Activated CD4-positive, alpha-beta T cell treated with anti-CD3 and anti-CD28 coated beads, Interleukin-2, amount 10 ng/mL, durations not matched to agents 24 days and 14 days (primary cell): ENCODE measurements at regions of chr11 and their contacts with region 1.

Region 1: DNA sequence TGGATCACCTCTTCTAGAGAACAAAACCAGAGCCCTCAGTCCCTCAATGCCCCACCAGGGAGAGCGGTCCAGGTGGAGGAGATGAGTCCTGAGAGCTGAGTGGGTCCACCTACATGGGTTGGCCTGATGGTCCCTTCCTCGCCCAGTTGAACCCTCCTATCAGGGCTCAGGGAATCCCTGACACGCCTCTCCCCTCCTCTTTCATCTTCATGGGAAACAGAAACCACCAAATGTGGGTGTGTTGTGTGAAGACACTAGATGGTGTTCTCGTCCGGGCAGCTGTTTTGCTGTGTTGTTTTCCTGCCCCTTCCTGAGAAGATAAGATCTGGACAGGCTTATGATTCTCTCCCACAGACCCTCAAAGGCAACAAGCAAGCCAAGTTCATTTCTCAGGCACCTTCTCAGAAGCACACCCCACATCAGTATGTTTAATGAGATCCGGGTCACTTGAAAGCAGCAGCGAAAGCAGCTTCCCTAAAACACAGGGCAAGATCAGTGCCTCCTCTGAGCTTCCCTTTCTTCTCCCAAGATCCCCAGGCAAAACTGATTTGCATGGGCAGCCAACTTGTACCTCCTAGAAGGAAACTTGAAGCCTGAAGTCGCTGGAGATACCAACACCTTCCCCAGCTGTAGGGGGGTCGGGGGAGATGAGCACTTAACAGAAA is 35.3 kb upstream of the POU2AF1 start:
- DNase-seq: peak; percentile 69
- H3K4me3 Mint-ChIP-seq: peak overlapping the region; percentile 80
- H3K27ac Mint-ChIP-seq: peak overlapping the region; percentile 90
- H3K4me1 Mint-ChIP-seq: peaks cover 72% of the 10 kb centered on the region
- H3K27me3 Mint-ChIP-seq: no peaks in the 10 kb centered on the region

Region 2: DNA sequence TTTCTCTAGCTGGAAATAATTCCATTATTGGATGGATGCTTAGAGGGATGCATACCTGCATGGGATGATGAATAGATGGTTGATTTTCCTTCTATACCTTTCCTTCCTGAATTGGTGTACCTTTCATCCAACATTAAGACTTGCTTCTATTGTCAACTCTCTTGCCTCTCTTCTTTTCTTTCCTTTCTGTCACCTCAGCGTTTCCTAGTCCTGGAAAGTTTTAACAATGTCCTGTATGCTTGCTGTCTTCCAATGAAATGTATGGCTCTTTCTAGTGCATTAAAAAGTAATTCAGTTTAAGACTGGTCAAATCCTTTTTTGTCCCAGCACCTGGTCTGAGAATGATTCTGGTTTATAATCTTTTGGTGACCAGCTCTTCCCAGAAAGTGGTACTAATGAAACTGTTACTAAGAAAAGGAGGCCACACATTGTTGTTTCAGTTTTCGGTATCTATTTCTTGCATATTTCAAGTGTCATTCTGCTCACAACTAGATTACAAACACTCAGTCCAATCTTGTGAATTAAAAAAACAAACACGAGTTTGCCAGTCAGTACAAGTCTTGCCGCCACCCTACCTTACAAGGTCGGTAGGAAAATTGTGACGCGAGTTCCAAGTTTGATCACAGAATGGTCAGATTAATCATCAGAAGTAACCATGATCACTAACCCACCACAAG is 43.4 kb before region 1 on chr11:
- intact Hi-C with region 1: loop called (anchors 1 kb)
- DNase-seq: no peak
- H3K4me3 Mint-ChIP-seq: peak overlapping the region; percentile 50
- H3K27ac Mint-ChIP-seq: peak overlapping the region; percentile 90
- H3K4me1 Mint-ChIP-seq: peaks cover 56% of the 10 kb centered on the region
- H3K27me3 Mint-ChIP-seq: no peaks in the 10 kb centered on the region

Region 3: DNA sequence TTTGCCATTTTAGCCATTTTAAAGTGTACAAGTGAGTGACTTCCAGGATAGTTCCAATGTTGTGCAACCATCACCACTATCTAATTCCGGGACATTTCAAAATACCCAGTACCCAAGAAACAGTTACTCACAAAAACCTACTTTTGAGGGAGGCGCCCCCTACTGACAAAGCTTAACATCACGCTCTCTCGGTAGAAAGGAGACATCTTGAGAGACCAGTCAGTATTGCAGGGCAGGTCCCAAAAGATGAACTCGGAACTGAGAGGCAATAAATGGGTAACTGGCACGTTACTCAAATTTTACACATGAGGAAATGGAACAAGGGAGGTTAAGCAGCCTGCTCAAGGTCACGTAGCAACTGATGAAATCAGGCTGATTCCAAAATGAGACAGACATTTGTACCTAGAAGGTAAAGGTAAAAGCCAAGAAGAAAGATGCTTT is 14.7 kb after region 1 on chr11:
- intact Hi-C with region 1: no loop called
- DNase-seq: peak; percentile 89
- H3K4me3 Mint-ChIP-seq: no peak overlapping the region
- H3K27ac Mint-ChIP-seq: no peak overlapping the region
- H3K4me1 Mint-ChIP-seq: peaks cover 4% of the 10 kb centered on the region
- H3K27me3 Mint-ChIP-seq: peaks cover 12% of the 10 kb centered on the region

Region 4: GRCh38 chr11:111446404-111447111 is 32.2 kb after region 1 on chr11:
- intact Hi-C with region 1: no loop called
- DNase-seq: peak; percentile 94
- H3K4me3 Mint-ChIP-seq: no peak overlapping the region
- H3K27ac Mint-ChIP-seq: peak overlapping the region; percentile 4
- H3K4me1 Mint-ChIP-seq: peaks cover 14% of the 10 kb centered on the region
- H3K27me3 Mint-ChIP-seq: peaks cover 2% of the 10 kb centered on the region